Right cardiac atrium (tissue), 5 donors: ENCODE measurements at regions of chr17 and their contacts with region 1.

Region 1: GRCh38 chr17:73719588-73720071 is 75.4 kb upstream of the SDK2 start:
- DNase-seq: peak; percentile 33 to 69 (median 62)
- ATAC-seq: peak; percentile 53 to 63
- H3K4me3 ChIP-seq: no peak overlapping the region
- H3K27ac ChIP-seq: no peak overlapping the region
- H3K4me1 ChIP-seq: peaks cover 2% of the 10 kb centered on the region
- H3K27me3 ChIP-seq: no peaks in the 10 kb centered on the region

Region 2: GRCh38 chr17:73782641-73783381 is 63.2 kb after region 1 on chr17:
- intact Hi-C with region 1: no loop called
- DNase-seq: no peak
- ATAC-seq: no peak
- H3K4me3 ChIP-seq: no peak overlapping the region
- H3K27ac ChIP-seq: no peak overlapping the region
- H3K4me1 ChIP-seq: peaks cover 5% of the 10 kb centered on the region
- H3K27me3 ChIP-seq: no peaks in the 10 kb centered on the region

Region 3: DNA sequence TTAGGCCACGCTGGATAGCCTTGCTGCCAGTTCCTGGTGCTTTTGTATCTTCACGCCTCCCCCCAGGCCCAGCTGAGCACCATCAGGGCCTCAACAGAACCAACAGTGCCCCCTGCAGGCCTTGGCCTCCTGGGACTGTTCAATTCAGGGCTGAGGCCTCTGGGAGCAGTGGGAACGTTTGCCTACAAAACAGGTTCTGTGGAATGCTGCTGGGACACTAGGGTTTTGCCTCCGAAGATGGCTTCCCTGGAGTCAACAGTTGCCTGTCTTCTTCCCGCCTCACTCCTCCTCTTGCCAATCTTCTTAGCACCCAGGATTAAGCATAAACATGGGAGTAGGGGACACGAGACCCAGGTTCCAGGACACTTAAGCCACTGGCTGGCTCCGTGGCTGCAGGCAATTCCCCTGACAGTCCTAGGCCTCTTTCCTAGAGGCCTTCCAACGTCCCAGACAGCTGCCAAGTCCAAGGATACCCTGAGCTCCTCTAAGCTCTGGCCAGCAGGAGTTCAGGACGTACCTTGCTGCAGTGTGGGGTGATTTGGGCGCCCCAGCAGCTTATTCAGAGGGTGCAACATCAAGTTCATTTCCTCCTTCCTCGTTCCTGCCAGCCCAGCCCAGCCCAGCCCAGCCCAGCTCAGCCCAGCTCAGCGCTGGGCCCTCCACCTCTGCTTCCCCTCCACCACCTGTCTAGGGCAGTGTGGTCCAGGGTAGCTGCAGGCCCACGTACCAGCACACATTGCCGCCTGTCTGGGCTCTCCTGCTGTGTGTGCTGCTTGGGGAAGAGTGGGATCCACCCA is 237.2 kb after region 1 on chr17:
- intact Hi-C with region 1: loop called in 1 of 4 experiments (anchors 10 kb)
- DNase-seq: peak in 2 of 3 donors; percentile 48 to 85
- ATAC-seq: peak; percentile 36 to 55
- H3K4me3 ChIP-seq: no peak overlapping the region
- H3K27ac ChIP-seq: no peak overlapping the region
- H3K4me1 ChIP-seq: peaks cover 2% of the 10 kb centered on the region
- H3K27me3 ChIP-seq: no peaks in the 10 kb centered on the region